Breast epithelium (tissue), 4 donors: ENCODE measurements at regions of chr2 and their contacts with region 1.

Region 1: GRCh38 chr2:182866461-182867406 is at the start of gene FRZB:
- DNase-seq: peak; percentile 54 to 56
- H3K4me3 ChIP-seq: peak within 1 kb of the TSS; percentile 39 to 72 (median 61)
- H3K27ac ChIP-seq: peak within 1 kb of the TSS; percentile 72 to 73
- H3K4me1 ChIP-seq: peaks cover 0 to 4% of the 10 kb centered on the region in 2 donors
- H3K27me3 ChIP-seq: no peaks in the 10 kb centered on the region
- CTCF ChIP-seq: no peak
- POLR2A ChIP-seq: no peak
- total RNA-seq, gene FRZB: 1.8 to 12.0 (median 2.9) TPM

Region 2: GRCh38 chr2:182740701-182741100 is 126.0 kb before region 1 on chr2:
- intact Hi-C with region 1: loop called (anchors 10 kb)
- DNase-seq: no peak
- H3K4me3 ChIP-seq: no peak overlapping the region
- H3K27ac ChIP-seq: no peak overlapping the region
- H3K4me1 ChIP-seq: no peaks in the 10 kb centered on the region
- H3K27me3 ChIP-seq: no peaks in the 10 kb centered on the region
- CTCF ChIP-seq: no peak
- POLR2A ChIP-seq: no peak

Region 3: GRCh38 chr2:182852084-182852483 is 14.7 kb before region 1 on chr2:
- intact Hi-C with region 1: no loop called
- DNase-seq: no peak
- H3K4me3 ChIP-seq: no peak overlapping the region
- H3K27ac ChIP-seq: no peak overlapping the region
- H3K4me1 ChIP-seq: no peaks in the 10 kb centered on the region
- H3K27me3 ChIP-seq: no peaks in the 10 kb centered on the region
- CTCF ChIP-seq: no peak
- POLR2A ChIP-seq: no peak

Region 4: DNA sequence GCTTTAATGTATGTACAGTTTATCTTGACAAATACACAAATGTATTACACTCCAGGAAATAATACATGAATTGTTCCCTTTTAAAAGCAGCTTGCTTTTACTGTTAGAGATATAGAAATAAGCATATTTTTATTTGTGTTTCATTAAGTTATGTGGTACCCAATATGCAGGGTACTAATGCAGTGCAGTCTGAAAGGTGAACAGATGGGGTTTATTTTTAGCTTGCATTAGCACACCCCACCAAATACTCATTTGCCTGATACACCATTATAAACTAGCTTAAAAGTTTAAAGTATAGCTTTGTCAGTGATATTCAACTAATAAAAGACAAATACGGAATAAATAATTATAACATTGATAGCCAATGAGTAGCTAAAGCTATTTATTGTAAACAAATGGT is 1336.9 kb after region 1 on chr2:
- intact Hi-C with region 1: no loop called
- DNase-seq: no peak
- H3K4me3 ChIP-seq: no peak overlapping the region
- H3K27ac ChIP-seq: no peak overlapping the region
- H3K4me1 ChIP-seq: no peaks in the 10 kb centered on the region
- H3K27me3 ChIP-seq: no peaks in the 10 kb centered on the region
- CTCF ChIP-seq: no peak
- POLR2A ChIP-seq: no peak